CD8-positive, alpha-beta memory T cell (primary cell): ENCODE measurements at regions of chr6 and their contacts with region 1.

Region 1: DNA sequence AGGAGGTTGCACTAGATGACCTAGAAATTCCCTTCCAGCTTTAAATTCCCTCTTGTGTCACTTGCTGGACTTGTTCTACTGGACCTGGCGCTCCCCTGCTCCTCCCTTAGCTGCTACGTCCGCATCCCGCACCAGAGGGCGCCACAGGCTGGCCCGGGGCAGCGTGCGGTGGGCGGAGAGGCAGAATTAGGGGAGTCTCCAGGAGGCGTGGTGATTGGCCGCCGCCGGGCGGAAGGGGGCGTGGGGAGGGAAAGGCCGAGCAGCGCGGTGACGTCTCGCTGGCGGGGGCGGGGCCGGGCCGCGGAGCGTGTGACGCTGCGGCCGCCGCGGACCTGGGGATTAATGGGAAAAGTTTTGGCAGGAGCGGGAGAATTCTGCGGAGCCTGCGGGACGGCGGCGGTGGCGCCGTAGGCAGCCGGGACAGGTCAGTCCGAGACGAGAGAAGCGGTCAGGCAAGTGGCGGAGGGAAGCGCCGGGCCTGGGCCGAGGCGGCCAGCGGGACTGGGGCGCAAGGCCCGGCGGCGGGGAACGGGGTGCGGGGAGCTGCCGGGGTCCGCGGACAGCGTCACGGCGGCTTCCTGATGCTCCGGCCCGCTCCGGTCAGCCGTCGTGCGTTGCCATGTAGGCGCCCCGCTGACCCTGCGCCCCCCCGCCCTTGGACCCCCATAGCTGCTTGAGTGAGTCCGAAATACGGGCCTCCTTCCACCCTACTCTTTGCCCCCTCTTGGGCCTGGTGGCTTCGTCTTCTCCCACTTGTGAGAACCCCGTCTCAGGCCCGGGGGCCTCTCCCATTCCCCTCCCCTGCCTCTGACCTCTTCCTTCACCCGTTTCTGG is at the start of gene PPARD:
- DNase-seq: peak; percentile 96 to 98 (median 97)
- H3K4me3 ChIP-seq: peak within 1 kb of the TSS; percentile 90
- H3K4me3 Mint-ChIP-seq: peak within 1 kb of the TSS; percentile 86 to 98 (median 95)
- H3K27ac ChIP-seq: peak within 1 kb of the TSS; percentile 79
- H3K27ac Mint-ChIP-seq: peak within 1 kb of the TSS; percentile 80 to 98 (median 95)
- H3K4me1 ChIP-seq: peaks cover 51% of the 10 kb centered on the region
- H3K4me1 Mint-ChIP-seq: peaks cover 45 to 55% (median 50%) of the 10 kb centered on the region in 3 donors
- H3K27me3 ChIP-seq: no peaks in the 10 kb centered on the region
- H3K27me3 Mint-ChIP-seq: peaks cover 0 to 1% of the 10 kb centered on the region in 2 donors
- total RNA-seq, gene PPARD: 14.8 to 16.2 TPM

Region 2: DNA sequence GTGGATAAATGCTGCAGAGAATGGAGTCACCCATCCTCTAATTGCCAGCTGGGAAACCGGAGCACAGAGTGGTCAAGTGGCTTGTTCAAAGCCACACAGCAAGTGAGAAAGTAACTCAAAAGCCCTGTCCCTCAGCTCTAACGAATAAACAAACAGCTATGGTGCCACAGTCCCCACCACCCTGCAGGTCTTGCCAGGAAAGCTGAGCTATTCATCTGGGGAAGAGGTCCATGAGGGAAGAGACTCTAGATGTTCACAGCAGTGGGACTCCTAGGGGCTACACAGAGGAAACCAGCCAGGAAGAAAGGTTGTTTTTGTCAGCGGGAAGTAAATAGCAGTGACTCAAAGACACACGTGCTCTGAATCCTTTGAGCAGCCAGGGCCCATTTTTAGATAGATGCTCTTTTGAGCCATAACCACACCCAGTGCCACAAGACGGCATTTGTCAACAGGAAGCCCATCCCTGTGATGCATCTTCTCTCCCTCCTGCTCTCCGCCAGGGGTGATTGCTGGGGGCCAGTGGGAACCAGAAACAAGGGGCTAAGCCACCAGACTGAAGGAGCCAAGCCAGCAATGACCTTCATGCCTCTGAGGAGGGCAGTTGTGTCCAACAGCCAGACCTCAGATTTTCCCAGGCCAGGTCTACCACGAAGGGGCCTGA is 168.9 kb before region 1 on chr6:
- CTCF ChIA-PET with region 1: no interaction called
- POLR2A ChIA-PET with region 1: no interaction called
- DNase-seq: no peak
- H3K4me3 ChIP-seq: no peak overlapping the region
- H3K4me3 Mint-ChIP-seq: peak overlapping the region in 2 of 7 donors; percentile 32 to 46
- H3K27ac ChIP-seq: no peak overlapping the region
- H3K27ac Mint-ChIP-seq: peak overlapping the region in 5 of 8 donors; percentile 2 to 86 (median 56)
- H3K4me1 ChIP-seq: no peaks in the 10 kb centered on the region
- H3K4me1 Mint-ChIP-seq: peaks cover 10 to 17% (median 16%) of the 10 kb centered on the region in 3 donors
- H3K27me3 ChIP-seq: peaks cover under 1% of the 10 kb centered on the region
- H3K27me3 Mint-ChIP-seq: peaks cover 7 to 28% of the 10 kb centered on the region in 2 donors

Region 3: GRCh38 chr6:35311390-35312075 is 30.9 kb before region 1 on chr6:
- CTCF ChIA-PET with region 1: interaction called, 6 read pairs
- POLR2A ChIA-PET with region 1: interaction called, 16 read pairs
- DNase-seq: peak in 4 of 5 donors; percentile 40 to 71 (median 63)
- H3K4me3 ChIP-seq: peak overlapping the region; percentile 56
- H3K4me3 Mint-ChIP-seq: peak overlapping the region; percentile 57 to 93 (median 84)
- H3K27ac ChIP-seq: peak overlapping the region; percentile 69
- H3K27ac Mint-ChIP-seq: peak overlapping the region; percentile 96 to 99 (median 98)
- H3K4me1 ChIP-seq: peaks cover 91% of the 10 kb centered on the region
- H3K4me1 Mint-ChIP-seq: peaks cover 82 to 96% (median 94%) of the 10 kb centered on the region in 3 donors
- H3K27me3 ChIP-seq: no peaks in the 10 kb centered on the region
- H3K27me3 Mint-ChIP-seq: no peaks in the 10 kb centered on the region

Region 4: DNA sequence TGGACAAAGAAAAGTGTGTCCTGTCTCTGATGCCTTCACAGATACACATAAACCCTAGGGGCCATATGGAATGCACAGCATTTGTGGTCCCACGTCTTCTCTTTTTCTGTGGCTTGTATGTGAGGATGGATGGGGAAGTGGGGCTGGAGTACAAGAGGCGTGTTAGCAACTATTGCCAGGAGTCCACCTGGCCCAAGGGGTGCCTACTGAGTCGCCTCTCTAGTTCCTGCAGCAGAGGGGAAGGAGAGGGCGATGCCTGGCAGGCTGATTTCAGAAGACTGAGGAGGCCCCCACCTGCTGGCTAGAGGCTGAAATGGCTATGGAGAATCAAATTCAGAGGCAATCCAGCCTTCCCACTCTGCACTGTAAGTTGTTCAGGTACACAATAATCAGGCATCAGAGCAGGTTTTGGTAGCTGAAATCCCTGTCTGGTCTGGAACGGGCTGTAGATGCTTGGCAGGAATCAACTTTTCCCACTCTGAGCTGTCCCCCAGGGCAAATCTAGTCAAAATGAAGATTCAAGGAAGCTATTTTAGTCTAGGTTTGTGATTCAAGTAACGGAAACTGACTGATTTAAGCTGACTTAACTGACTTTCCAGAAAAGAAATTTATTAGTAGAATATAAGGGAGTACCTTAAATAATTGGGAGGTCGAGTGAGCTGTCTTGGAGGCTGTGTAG is 15.0 kb before region 1 on chr6:
- CTCF ChIA-PET with region 1: interaction called, 16 read pairs
- POLR2A ChIA-PET with region 1: interaction called, 3 read pairs
- DNase-seq: peak; percentile 57 to 84 (median 69)
- H3K4me3 ChIP-seq: no peak overlapping the region
- H3K4me3 Mint-ChIP-seq: peak overlapping the region in 1 of 7 donors; percentile 51
- H3K27ac ChIP-seq: no peak overlapping the region
- H3K27ac Mint-ChIP-seq: peak overlapping the region; percentile 69 to 92 (median 89)
- H3K4me1 ChIP-seq: peaks cover 18% of the 10 kb centered on the region
- H3K4me1 Mint-ChIP-seq: peaks cover 19 to 21% (median 20%) of the 10 kb centered on the region in 3 donors
- H3K27me3 ChIP-seq: no peaks in the 10 kb centered on the region
- H3K27me3 Mint-ChIP-seq: no peaks in the 10 kb centered on the region

Region 5: DNA sequence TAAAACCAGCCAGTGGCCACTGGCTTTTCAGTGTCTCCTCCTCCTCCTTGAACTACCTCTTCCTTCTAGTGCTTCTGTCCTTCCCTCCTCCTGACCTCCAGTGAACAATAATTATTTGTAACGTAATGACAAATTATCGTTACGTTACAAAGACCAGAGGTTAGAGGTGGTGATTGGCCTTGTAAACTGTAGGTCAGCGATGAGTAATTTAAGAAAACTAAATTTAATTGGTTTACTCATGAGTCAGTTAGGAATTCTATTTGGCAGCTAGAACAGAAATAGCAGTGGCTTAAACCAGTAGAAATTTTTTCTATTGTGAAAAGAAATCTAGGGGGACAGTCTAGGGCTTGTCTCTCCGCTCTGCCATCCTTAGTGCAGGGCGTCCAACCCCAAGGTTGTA is 38.7 kb after region 1 on chr6:
- CTCF ChIA-PET with region 1: no interaction called
- POLR2A ChIA-PET with region 1: no interaction called
- DNase-seq: no peak
- H3K4me3 ChIP-seq: no peak overlapping the region
- H3K4me3 Mint-ChIP-seq: no peak overlapping the region
- H3K27ac ChIP-seq: no peak overlapping the region
- H3K27ac Mint-ChIP-seq: peak overlapping the region in 1 of 8 donors; percentile 67
- H3K4me1 ChIP-seq: no peaks in the 10 kb centered on the region
- H3K4me1 Mint-ChIP-seq: peaks cover 33 to 43% (median 37%) of the 10 kb centered on the region in 3 donors
- H3K27me3 ChIP-seq: no peaks in the 10 kb centered on the region
- H3K27me3 Mint-ChIP-seq: no peaks in the 10 kb centered on the region

Region 6: DNA sequence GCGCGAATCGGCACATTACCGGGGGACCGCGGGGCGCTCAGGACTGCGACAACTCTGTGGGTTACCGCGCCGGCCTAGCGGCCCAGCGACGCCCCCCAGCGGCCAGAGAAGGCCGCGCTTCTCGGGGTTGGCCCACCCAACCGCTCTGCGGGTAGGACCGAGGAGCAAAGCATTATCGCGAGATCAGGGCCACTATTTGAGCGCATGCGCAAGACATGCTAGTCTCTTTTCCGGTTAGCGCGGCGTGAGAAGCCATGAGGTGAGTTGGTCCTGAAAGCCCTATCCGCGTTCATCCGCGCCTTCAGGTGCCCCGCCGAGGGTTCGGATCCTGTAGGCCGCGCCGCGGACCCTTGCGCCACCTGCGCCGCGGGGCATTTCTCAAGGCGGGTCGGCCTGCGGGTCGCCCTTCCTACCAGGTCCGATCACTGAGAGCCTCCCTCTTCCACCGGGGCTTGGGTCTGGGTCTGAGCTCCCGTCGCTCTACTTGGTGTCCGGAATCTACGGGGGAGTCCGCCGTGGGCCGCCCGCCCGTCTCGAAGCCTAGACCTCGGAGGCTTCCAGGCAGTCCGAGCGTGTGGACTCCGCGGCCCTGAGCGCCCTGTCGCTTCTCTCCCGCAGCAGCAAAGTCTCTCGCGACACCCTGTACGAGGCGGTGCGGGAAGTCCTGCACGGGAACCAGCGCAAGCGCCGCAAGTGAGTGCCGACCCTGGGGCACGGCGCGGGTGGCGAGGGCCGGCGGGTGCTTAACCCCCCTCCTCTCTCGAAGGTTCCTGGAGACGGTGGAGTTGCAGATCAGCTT is 125.9 kb after region 1 on chr6 and contains the start of gene RPL10A:
- CTCF ChIA-PET with region 1: interaction called, 17 read pairs
- POLR2A ChIA-PET with region 1: interaction called, 3 read pairs
- DNase-seq: peak; percentile 91 to 99 (median 95)
- H3K4me3 ChIP-seq: peak within 1 kb of the TSS; percentile 92
- H3K4me3 Mint-ChIP-seq: peak within 1 kb of the TSS; percentile 89 to 99 (median 97)
- H3K27ac ChIP-seq: peak within 1 kb of the TSS; percentile 87
- H3K27ac Mint-ChIP-seq: peak within 1 kb of the TSS; percentile 92 to 99 (median 98)
- H3K4me1 ChIP-seq: peaks cover 39% of the 10 kb centered on the region
- H3K4me1 Mint-ChIP-seq: peaks cover 35 to 43% (median 41%) of the 10 kb centered on the region in 3 donors
- H3K27me3 ChIP-seq: no peaks in the 10 kb centered on the region
- H3K27me3 Mint-ChIP-seq: peaks cover 0 to 5% of the 10 kb centered on the region in 2 donors
- total RNA-seq, gene RPL10A: 1,737 to 1,739 TPM